Naive thymus-derived CD4-positive, alpha-beta T cell (primary cell): ENCODE measurements at regions of chr5 and their contacts with region 1.

Region 1: DNA sequence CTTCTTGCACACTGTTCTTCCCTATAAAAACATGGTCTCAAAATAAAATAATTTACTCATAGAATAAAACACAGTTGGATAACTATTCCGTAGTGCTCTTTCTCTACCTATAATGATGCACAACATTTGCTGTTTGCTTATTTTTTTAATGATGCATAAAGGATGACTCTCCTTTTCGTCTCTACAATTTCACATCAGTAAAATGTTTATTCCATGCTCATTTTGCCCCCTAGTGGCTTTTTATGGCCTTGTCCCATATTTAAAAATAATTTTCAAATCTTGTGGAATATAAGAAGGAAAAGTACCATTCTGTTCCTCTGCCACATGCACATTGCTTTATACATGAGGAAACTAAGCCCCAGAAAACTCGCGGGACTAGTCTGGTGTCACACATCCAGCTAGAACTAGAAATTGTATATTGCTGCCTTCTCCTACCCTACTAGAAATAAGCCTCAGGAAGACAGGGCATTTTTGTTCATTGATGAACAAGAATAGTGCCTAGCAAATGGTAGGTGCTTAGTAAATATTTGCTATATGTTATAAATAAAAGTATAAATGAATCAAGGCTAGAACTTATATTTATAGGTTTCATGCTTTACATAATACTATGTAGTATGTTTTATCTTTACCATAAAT is 12.7 kb downstream of the KCTD16 start:
- DNase-seq: peak in 6 of 9 donors; percentile 17 to 42 (median 34)
- ATAC-seq: no peak
- H3K4me3 ChIP-seq: no peak overlapping the region
- H3K4me3 Mint-ChIP-seq: no peak overlapping the region
- H3K27ac ChIP-seq: no peak overlapping the region
- H3K27ac Mint-ChIP-seq: peak overlapping the region in 5 of 9 donors; percentile 15 to 71 (median 49)
- H3K4me1 ChIP-seq: peaks cover 19 to 41% of the 10 kb centered on the region in 2 donors
- H3K4me1 Mint-ChIP-seq: peaks cover 19 to 56% (median 43%) of the 10 kb centered on the region in 7 donors
- H3K27me3 ChIP-seq: no peaks in the 10 kb centered on the region
- H3K27me3 Mint-ChIP-seq: peaks cover 0 to 2% (median 0%) of the 10 kb centered on the region in 5 donors

Region 2: DNA sequence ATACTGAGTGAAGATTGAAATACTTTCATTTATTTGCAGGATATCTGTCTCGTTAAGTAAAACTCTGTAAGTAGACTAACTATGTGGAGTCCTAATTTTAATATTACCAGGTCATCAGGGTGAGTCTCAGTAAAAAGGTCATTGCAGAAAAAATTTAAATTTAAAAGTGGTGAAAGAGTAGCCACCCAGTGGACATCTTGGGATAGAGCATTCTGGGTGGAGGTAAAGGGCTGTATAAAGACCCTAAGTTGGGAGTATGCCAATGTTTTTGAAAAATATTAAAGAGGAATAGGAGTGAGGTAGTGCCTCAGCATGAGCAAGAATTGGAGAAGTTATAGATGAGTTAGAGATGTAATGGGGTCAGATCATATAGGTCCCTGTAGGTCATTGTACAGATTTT is 225.9 kb before region 1 on chr5:
- CTCF ChIA-PET with region 1: no interaction called
- POLR2A ChIA-PET with region 1: no interaction called
- intact Hi-C with region 1: no loop called
- DNase-seq: no peak
- ATAC-seq: no peak
- H3K4me3 ChIP-seq: no peak overlapping the region
- H3K4me3 Mint-ChIP-seq: no peak overlapping the region
- H3K27ac ChIP-seq: no peak overlapping the region
- H3K27ac Mint-ChIP-seq: no peak overlapping the region
- H3K4me1 ChIP-seq: no peaks in the 10 kb centered on the region
- H3K4me1 Mint-ChIP-seq: no peaks in the 10 kb centered on the region
- H3K27me3 ChIP-seq: no peaks in the 10 kb centered on the region
- H3K27me3 Mint-ChIP-seq: peaks cover 0 to 15% (median 7%) of the 10 kb centered on the region in 5 donors

Region 3: GRCh38 chr5:144170276-144171024 is 12.9 kb before region 1 on chr5 and contains the starts of genes KCTD16 and YIPF5:
- CTCF ChIA-PET with region 1: interaction called, 13 read pairs
- POLR2A ChIA-PET with region 1: interaction called, 135 read pairs
- intact Hi-C with region 1: loop called in 1 of 2 experiments (anchors 1 kb)
- DNase-seq: peak; percentile 90 to 98 (median 98)
- ATAC-seq: peak; percentile 98
- H3K4me3 ChIP-seq: peak within 1 kb of the TSS; percentile 79
- H3K4me3 Mint-ChIP-seq: peak within 1 kb of the TSS; percentile 90 to 99 (median 94)
- H3K27ac ChIP-seq: peak within 1 kb of the TSS; percentile 91
- H3K27ac Mint-ChIP-seq: peak within 1 kb of the TSS; percentile 85 to 96 (median 95)
- H3K4me1 ChIP-seq: peaks cover 15 to 19% of the 10 kb centered on the region in 2 donors
- H3K4me1 Mint-ChIP-seq: peaks cover 19 to 56% (median 52%) of the 10 kb centered on the region in 7 donors
- H3K27me3 ChIP-seq: no peaks in the 10 kb centered on the region
- H3K27me3 Mint-ChIP-seq: peaks cover 0 to 29% (median 0%) of the 10 kb centered on the region in 5 donors
- total RNA-seq, gene KCTD16: 0.07 to 0.22 TPM in 2 of 5 experiments, not detected in the others
- total RNA-seq, gene YIPF5: 27.0 to 49.2 (median 38.6) TPM